A673 (cell line): ENCODE measurements at regions of chr17 and their contacts with region 1.

Region 1: DNA sequence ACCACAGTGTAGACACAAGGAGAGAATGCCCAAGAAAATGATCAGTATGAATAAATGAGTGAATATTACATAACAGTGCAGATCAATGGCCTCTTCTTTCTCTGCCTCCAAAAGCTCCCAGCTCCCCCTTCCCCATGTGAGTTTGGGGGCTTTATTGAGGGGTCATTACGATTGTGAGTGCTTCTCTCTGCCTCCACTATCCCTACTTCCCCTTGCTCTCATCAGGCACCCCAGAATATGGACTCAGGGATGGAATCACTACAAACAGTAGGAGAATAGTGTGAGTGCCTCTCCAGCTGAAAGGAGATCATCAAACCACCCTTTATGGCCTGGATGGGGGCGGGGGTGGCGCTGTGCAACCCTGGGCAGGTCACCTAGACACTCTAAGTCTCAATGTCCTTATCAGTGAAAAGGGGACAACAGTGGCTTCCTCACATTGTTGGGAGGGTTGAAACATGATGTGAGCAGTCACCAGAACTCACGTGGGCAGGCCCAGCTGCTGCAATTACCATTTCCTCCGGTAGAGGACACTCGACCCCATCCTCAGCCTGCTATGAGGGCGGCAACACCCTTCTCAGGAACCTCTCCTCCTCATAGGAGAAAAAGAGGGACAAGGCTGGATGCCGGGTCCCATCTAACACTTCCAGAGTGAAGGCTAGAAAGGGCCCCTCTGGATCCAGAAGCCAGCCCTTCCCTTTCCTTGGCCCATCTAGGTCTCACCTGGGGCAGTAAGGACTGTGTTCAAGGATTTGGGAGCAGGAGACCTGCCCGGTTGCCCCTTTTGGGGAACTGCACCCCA is 2.1 kb upstream of the EPOP start:
- DNase-seq: peak; percentile 79
- H3K4me3 ChIP-seq: no peak overlapping the region
- H3K27ac ChIP-seq: no peak overlapping the region
- H3K4me1 ChIP-seq: no peaks in the 10 kb centered on the region
- H3K27me3 ChIP-seq: peaks cover 5% of the 10 kb centered on the region
- CTCF ChIP-seq: peak; percentile 75

Region 2: DNA sequence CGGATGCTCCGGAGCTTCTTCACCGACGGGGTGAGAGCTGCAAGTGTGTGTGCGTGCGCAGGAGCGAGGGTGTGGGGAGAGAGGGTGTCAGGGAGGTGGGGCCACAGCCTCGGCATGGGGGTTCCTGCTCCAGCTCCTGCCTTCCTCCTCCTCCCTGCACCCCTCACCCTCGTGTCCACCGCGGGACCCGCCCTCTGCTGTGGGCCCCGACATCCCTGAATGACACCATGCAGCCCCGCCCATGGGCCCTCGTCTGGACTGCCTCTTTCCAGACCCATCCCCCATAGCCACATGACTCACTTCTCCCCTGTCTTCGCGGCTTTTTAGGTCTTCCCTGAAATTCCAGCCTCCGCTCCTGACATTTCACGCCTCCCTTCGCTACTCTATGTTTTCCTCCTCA is 207.0 kb before region 1 on chr17:
- CTCF ChIA-PET with region 1: no interaction called
- POLR2A ChIA-PET with region 1: no interaction called
- intact Hi-C with region 1: no loop called
- DNase-seq: no peak
- H3K4me3 ChIP-seq: no peak overlapping the region
- H3K27ac ChIP-seq: no peak overlapping the region
- H3K4me1 ChIP-seq: peaks cover 4% of the 10 kb centered on the region
- H3K27me3 ChIP-seq: no peaks in the 10 kb centered on the region
- CTCF ChIP-seq: no peak

Region 3: DNA sequence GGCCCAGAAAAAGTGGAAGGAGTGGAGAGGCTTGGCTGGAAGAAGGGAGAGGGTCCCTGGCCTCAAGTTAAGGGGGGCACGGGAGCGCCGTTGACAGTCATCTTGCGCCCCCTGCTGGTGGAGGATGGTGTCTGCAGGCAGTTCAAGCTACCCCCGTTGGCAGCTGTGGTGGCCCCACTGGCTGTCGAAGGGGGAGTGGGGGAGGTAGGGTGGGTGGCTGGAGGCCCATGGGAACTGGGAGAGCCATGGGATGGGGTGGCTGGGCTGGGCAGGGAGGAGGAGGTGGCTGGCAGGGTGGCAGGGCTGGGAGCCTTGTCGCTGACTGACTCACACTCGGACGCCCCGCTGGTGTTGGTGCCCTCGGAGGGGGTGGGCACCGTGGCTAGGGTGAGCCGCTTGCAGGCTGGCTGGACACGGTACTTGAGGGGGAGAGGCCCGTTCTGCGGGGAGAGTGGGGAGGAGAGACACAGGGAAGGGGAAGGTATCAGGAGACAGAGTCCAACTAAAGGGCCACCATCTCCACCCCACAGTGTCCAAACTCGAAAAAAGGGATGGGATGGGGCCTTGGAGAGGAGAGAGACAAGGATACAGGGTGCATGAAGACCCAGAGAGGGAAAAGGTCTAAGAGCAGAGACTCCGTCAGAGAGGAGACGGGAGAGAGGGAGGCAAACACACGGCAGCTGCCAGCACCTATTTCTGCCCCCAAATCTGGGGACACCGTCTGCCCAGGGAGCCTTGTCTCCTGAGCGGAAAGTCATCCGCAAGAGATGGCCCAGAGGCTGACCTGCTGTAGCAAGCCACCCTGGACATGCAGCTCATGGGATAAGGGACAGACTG is 58.5 kb after region 1 on chr17:
- CTCF ChIA-PET with region 1: interaction called, 5 read pairs
- POLR2A ChIA-PET with region 1: no interaction called
- intact Hi-C with region 1: loop called (anchors 2 kb)
- DNase-seq: peak; percentile 52
- H3K4me3 ChIP-seq: no peak overlapping the region
- H3K27ac ChIP-seq: no peak overlapping the region
- H3K4me1 ChIP-seq: no peaks in the 10 kb centered on the region
- H3K27me3 ChIP-seq: no peaks in the 10 kb centered on the region
- CTCF ChIP-seq: peak; percentile 82

Region 4: GRCh38 chr17:39294060-39294459 is 617.2 kb after region 1 on chr17:
- CTCF ChIA-PET with region 1: no interaction called
- POLR2A ChIA-PET with region 1: no interaction called
- intact Hi-C with region 1: no loop called
- DNase-seq: no peak
- H3K4me3 ChIP-seq: no peak overlapping the region
- H3K27ac ChIP-seq: no peak overlapping the region
- H3K4me1 ChIP-seq: no peaks in the 10 kb centered on the region
- H3K27me3 ChIP-seq: no peaks in the 10 kb centered on the region
- CTCF ChIP-seq: no peak